ENCODE measurements at regions of chr11 and their contacts with region 1.

Region 1: DNA sequence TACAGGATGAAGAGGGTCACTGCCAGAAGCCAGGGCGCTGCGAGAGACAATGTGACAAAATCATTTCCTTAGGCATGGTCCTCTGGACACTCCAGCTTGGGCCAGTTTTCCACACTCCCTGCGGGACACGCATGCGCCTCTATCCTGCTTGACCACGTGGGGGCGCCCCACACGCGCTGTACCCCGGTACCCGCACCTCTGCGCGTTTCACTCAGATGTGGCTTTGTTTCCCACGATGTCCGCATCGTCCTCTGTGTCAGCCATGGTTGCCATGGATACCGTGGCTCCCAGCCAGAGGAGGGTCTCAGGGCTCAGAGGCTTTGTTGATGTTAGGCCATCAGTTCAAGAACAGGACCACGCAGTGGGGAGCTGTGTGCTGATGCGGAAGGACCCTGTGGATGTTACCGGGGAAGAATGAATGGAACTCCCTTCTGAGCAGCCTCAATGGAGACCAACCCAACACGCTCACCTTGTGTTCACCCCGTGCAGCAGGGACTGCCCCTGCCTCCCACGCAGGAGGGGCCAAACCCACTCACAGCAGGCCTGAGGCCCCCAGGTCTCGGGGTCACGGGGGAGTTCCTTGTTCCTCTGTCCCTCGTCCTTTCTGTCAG is 101.1 kb upstream of the SLC22A12 start:
- DNase-seq: peak; percentile 59 to 80
- ATAC-seq: peak; percentile 92 to 98
- H3K4me3 ChIP-seq: no peak overlapping the region
- H3K27ac ChIP-seq: no peak overlapping the region
- H3K4me1 ChIP-seq: no peaks in the 10 kb centered on the region
- CTCF ChIP-seq: peak; percentile 79
- EP300 ChIP-seq: no peak
- POLR2A ChIP-seq: no peak
- RAD21 ChIP-seq: peak; percentile 81 to 82

Region 2: DNA sequence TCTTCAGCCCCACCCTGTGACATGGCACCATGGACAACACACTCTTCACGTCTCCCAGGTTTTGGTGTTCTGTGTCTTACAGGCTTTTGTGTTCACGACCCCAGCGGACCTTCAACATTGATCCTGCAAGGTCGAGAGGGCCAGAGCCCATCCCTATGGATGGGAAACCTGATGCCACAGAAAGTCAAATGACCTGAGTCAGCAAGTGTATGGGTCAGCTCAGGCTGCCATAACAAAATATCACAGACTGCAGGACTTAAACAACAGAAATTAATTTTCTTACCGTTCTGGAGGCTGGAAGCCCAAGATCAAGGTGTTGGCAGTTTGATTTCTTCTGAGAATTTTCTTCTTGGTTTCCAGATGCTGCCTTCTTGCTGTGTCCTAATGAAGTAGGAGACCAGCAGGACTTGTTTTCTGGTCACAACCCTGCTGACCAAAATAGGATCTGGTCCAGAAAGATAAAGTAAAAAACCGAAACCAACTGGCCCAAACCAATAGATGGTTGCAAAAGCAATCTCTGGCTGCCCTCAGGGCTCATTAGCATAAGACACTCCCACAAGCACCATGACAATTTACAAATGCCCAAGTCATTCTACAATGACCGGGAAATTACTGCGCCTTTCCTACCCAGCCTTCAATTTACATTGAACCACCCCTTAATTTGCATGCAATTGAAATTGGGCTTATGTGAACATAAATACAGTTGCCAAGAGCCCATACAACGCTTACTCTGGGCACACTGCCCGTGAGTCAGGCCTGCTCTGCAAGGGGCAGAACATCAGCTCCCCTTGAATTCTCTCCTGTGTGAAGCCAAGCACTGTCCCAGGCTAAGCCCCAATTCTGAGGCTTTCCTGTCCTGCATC is 17.1 kb before region 1 on chr11:
- CTCF ChIA-PET with region 1: interaction called, 19 read pairs
- POLR2A ChIA-PET with region 1: no interaction called
- DNase-seq: no peak
- ATAC-seq: no peak
- H3K4me3 ChIP-seq: no peak overlapping the region
- H3K27ac ChIP-seq: no peak overlapping the region
- H3K4me1 ChIP-seq: no peaks in the 10 kb centered on the region
- CTCF ChIP-seq: no peak
- EP300 ChIP-seq: no peak
- POLR2A ChIP-seq: no peak
- RAD21 ChIP-seq: no peak

Region 3: DNA sequence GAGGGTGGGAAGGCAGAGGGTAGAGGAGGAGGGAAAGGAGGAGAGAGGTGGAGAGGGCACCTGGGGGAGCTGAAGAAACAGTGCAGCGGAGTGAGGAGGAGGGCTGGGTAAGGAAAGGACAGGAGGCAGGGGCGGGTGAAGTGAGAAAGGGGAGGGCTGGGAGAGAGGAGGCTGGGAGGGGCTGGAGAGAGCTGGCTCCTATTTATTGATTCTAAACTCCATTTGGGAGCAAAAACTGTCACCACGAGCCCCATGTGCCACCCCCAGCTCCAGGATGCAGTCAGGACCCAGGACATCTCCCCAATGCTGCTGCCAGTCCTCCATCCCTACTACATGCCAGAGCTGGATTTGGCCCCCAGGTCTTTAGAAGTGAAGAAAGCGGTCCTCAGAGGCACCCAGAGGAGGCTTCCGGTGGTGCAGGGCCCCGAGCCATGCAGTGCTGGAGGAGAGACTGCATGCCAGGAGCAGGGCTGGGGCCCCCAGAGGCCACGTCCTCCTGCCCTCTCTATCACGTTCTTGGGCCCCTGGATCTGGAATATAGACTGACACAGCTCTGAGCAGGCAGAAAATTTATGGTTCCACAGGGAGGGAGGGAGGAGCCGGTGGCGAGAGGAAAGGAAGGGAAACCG is 154.8 kb after region 1 on chr11:
- CTCF ChIA-PET with region 1: interaction called, 42 read pairs
- POLR2A ChIA-PET with region 1: no interaction called
- DNase-seq: peak in 1 of 2 experiments; percentile 48
- ATAC-seq: peak; percentile 64 to 79; a peak in 5 of 6 replicates
- H3K4me3 ChIP-seq: no peak overlapping the region
- H3K27ac ChIP-seq: no peak overlapping the region
- H3K4me1 ChIP-seq: peaks cover 11% of the 10 kb centered on the region; the same call in 1 of the 3 replicates
- CTCF ChIP-seq: no peak
- EP300 ChIP-seq: no peak
- POLR2A ChIP-seq: no peak
- RAD21 ChIP-seq: no peak

Region 4: GRCh38 chr11:64864473-64865285 is 374.7 kb after region 1 on chr11:
- CTCF ChIA-PET with region 1: no interaction called
- POLR2A ChIA-PET with region 1: no interaction called
- DNase-seq: no peak
- ATAC-seq: no peak
- H3K4me3 ChIP-seq: no peak overlapping the region
- H3K27ac ChIP-seq: peak overlapping the region; percentile 22 to 73; a peak in 5 of 6 replicates
- H3K4me1 ChIP-seq: peaks cover 54% of the 10 kb centered on the region
- CTCF ChIP-seq: no peak
- EP300 ChIP-seq: no peak
- POLR2A ChIP-seq: no peak
- RAD21 ChIP-seq: no peak

Measured in A549 (cell line).